CD14-positive monocyte (primary cell): ENCODE measurements at regions of chr4 and their contacts with region 1.

Region 1: GRCh38 chr4:138392751-138393308 is 150.7 kb upstream of the SLC7A11 start:
- DNase-seq: peak; percentile 80 to 90 (median 85)
- H3K4me3 ChIP-seq: no peak overlapping the region
- H3K4me3 Mint-ChIP-seq: peak overlapping the region in 1 of 2 donors; percentile 74
- H3K27ac ChIP-seq: peak overlapping the region; percentile 61 to 87
- H3K27ac Mint-ChIP-seq: peak overlapping the region; percentile 88 to 98 (median 92)
- H3K4me1 ChIP-seq: peaks cover 13 to 19% of the 10 kb centered on the region in 2 donors
- H3K4me1 Mint-ChIP-seq: peaks cover 21% of the 10 kb centered on the region
- H3K27me3 ChIP-seq: no peaks in the 10 kb centered on the region
- H3K27me3 Mint-ChIP-seq: peaks cover 0 to 4% (median 3%) of the 10 kb centered on the region in 3 donors
- CTCF ChIP-seq: no peak

Region 2: GRCh38 chr4:138953961-138954371 is 561.1 kb after region 1 on chr4:
- intact Hi-C with region 1: loop called in 1 of 2 experiments (anchors 10 kb)
- DNase-seq: peak; percentile 46 to 86 (median 72)
- H3K4me3 ChIP-seq: peak overlapping the region in 1 of 3 experiments; percentile 25
- H3K4me3 Mint-ChIP-seq: peak overlapping the region in 1 of 2 donors; percentile 69
- H3K27ac ChIP-seq: peak overlapping the region in 1 of 2 donors; percentile 62
- H3K27ac Mint-ChIP-seq: peak overlapping the region; percentile 83 to 93 (median 89)
- H3K4me1 ChIP-seq: peaks cover 49% of the 10 kb centered on the region in 2 donors
- H3K4me1 Mint-ChIP-seq: peaks cover 52% of the 10 kb centered on the region
- H3K27me3 ChIP-seq: no peaks in the 10 kb centered on the region
- H3K27me3 Mint-ChIP-seq: peaks cover 0 to 3% (median 1%) of the 10 kb centered on the region in 3 donors
- CTCF ChIP-seq: no peak